Mammary epithelial cell (primary cell): ENCODE measurements at regions of chr1 and their contacts with region 1.

Region 1: GRCh38 chr1:162136760-162137159 is 67.3 kb downstream of the NOS1AP start:
- DNase-seq: peak; percentile 70
- H3K4me3 ChIP-seq: no peak overlapping the region
- H3K27ac ChIP-seq: no peak overlapping the region
- H3K4me1 ChIP-seq: peaks cover 28% of the 10 kb centered on the region
- H3K27me3 ChIP-seq: no peaks in the 10 kb centered on the region
- CTCF ChIP-seq: no peak

Region 2: GRCh38 chr1:161946071-161946987 is 190.4 kb before region 1 on chr1:
- CTCF ChIA-PET with region 1: no interaction called
- dilution Hi-C with region 1: no loop called
- in situ Hi-C with region 1: no loop called
- intact Hi-C with region 1: no loop called
- DNase-seq: no peak
- H3K4me3 ChIP-seq: no peak overlapping the region
- H3K27ac ChIP-seq: no peak overlapping the region
- H3K4me1 ChIP-seq: no peaks in the 10 kb centered on the region
- H3K27me3 ChIP-seq: no peaks in the 10 kb centered on the region
- CTCF ChIP-seq: no peak

Region 3: DNA sequence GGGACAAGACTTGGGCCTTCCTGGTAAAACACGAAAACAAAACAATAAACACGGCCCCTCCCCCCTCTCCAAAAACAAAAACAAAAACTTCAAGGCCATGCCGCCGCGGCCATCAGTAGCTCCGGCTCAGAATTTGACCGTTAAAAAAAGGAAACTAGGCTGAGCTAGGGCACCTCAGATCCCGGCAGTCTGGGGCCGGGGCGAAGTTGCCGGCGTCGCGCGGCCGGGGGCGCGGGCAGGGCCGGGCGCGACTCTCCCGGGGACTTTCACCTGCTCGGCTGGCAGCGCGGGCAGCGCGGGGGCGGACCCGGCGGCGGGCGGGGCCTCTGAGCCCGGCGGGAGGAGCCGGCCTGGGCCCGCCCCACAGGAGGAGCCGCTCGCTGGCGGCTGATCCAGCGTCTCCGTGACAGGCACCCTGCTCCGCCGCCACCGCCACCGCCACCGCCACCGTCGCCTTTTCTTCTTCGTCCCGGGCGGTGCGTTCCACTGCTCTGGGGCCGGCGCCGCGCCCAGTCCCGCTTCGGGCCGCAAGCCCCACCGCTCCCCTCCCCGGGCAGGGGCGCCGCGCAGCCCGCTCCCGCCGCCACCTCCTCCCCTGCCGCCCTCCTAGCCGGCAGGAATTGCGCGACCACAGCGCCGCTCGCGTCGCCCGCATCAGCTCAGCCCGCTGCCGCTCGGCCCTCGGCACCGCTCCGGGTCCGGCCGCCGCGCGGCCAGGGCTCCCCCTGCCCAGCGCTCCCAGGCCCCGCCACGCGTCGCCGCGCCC is 67.2 kb before region 1 on chr1 and contains the start of gene NOS1AP:
- CTCF ChIA-PET with region 1: no interaction called
- dilution Hi-C with region 1: no loop called
- in situ Hi-C with region 1: no loop called
- intact Hi-C with region 1: loop called (anchors 5 kb)
- DNase-seq: peak; percentile 68
- H3K4me3 ChIP-seq: peak within 1 kb of the TSS; percentile 62 to 76 (median 64)
- H3K27ac ChIP-seq: no peak within 1 kb of the TSS
- H3K4me1 ChIP-seq: peaks cover 13% of the 10 kb centered on the region
- H3K27me3 ChIP-seq: peaks cover 3% of the 10 kb centered on the region
- CTCF ChIP-seq: no peak
- total RNA-seq, gene NOS1AP: 0.96 to 1.2 TPM